ENCODE measurements at regions of chr19 and their contacts with region 1.

Region 1: GRCh38 chr19:45717166-45717982 is 13.3 kb downstream of the FBXO46 start:
- DNase-seq: peak; percentile 97 to 99
- H3K4me3 ChIP-seq: peak overlapping the region; percentile 68 to 75
- H3K27ac ChIP-seq: peak overlapping the region; percentile 75 to 92
- H3K4me1 ChIP-seq: peaks cover 0 to 11% of the 10 kb centered on the region in 2 donors
- H3K27me3 ChIP-seq: no peaks in the 10 kb centered on the region
- CTCF ChIP-seq: peak in 2 of 3 experiments; percentile 24 to 38

Region 2: GRCh38 chr19:45730389-45731288 is 13.3 kb after region 1 on chr19 and contains the start of gene FBXO46:
- intact Hi-C with region 1: loop called (anchors 1 kb)
- DNase-seq: peak; percentile 95 to 99
- H3K4me3 ChIP-seq: peak within 1 kb of the TSS; percentile 88 to 89
- H3K27ac ChIP-seq: peak within 1 kb of the TSS; percentile 48 to 56
- H3K4me1 ChIP-seq: peaks cover 0 to 10% of the 10 kb centered on the region in 2 donors
- H3K27me3 ChIP-seq: no peaks in the 10 kb centered on the region
- CTCF ChIP-seq: peak in 1 of 3 experiments; percentile 9
- total RNA-seq, gene FBXO46: 27.5 TPM